GM23248 (cell line): ENCODE measurements at regions of chr7 and their contacts with region 1.

Region 1: GRCh38 chr7:70463352-70463938 is 668.5 kb upstream of the GALNT17 start:
- DNase-seq: no peak
- H3K4me3 ChIP-seq: no peak overlapping the region
- H3K27ac ChIP-seq: no peak overlapping the region
- H3K4me1 ChIP-seq: no peaks in the 10 kb centered on the region
- H3K27me3 ChIP-seq: no peaks in the 10 kb centered on the region

Region 2: DNA sequence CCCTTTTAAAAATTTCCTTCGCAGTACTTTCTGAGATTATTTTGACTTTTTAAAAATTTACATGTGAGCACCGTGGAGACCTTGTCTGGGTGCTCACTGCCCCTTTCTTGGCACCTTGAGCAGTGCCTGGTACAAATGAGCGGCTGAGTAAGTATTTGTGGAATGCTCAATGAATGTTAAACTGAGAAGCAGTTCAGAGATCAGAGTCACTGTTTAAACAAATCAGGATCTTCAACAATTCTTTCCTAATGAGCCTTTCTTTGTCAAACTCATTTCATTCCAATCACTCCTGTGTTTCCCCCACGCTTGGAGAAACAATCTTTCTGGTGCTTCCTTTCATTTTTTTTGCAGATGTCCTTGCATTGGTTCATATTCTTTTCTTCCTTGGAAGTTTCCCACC is 57.2 kb after region 1 on chr7:
- in situ Hi-C with region 1: loop called (anchors 10 kb)
- DNase-seq: peak; percentile 7
- H3K4me3 ChIP-seq: no peak overlapping the region
- H3K27ac ChIP-seq: no peak overlapping the region
- H3K4me1 ChIP-seq: peaks cover 7% of the 10 kb centered on the region
- H3K27me3 ChIP-seq: no peaks in the 10 kb centered on the region